ENCODE measurements at regions of chr2 and their contacts with region 1.

Region 1: GRCh38 chr2:201786471-201786870 is 5.7 kb upstream of the ALS2 start:
- DNase-seq: no peak
- ATAC-seq: no peak
- H3K4me3 ChIP-seq: no peak overlapping the region
- H3K4me3 Mint-ChIP-seq: no peak overlapping the region
- H3K27ac ChIP-seq: no peak overlapping the region
- H3K27ac Mint-ChIP-seq: no peak overlapping the region
- H3K4me1 ChIP-seq: peaks cover 4 to 5% of the 10 kb centered on the region in 2 experiments
- H3K4me1 Mint-ChIP-seq: peaks cover 5 to 8% (median 6%) of the 10 kb centered on the region in 3 donors
- H3K27me3 ChIP-seq: no peaks in the 10 kb centered on the region
- H3K27me3 Mint-ChIP-seq: peaks cover 0 to 6% of the 10 kb centered on the region in 2 donors

Region 2: GRCh38 chr2:200929334-200930249 is 856.9 kb before region 1 on chr2:
- CTCF ChIA-PET with region 1: no interaction called
- POLR2A ChIA-PET with region 1: no interaction called
- DNase-seq: no peak
- ATAC-seq: no peak
- H3K4me3 ChIP-seq: no peak overlapping the region
- H3K4me3 Mint-ChIP-seq: no peak overlapping the region
- H3K27ac ChIP-seq: no peak overlapping the region
- H3K27ac Mint-ChIP-seq: peak overlapping the region; percentile 50 to 52
- H3K4me1 ChIP-seq: no peaks in the 10 kb centered on the region
- H3K4me1 Mint-ChIP-seq: no peaks in the 10 kb centered on the region
- H3K27me3 ChIP-seq: no peaks in the 10 kb centered on the region
- H3K27me3 Mint-ChIP-seq: no peaks in the 10 kb centered on the region

Region 3: DNA sequence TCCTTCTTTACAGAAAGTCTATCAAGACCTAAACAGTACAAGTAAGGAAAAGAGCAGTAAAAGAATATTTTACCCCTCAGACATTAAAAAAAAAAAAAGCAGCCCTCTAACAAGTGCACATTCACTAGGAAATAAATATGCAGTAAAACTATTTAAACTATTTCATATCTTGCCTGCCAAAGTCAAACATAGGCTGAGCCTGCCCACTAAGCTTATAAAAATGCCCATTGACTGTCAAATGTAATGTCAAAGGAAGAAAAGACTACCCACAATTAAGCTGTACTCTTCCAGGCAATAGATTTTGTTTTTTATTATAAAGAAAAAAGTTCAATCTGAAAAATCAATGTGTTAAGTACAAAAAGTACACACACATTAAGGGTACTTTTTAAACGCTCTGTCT is 17.6 kb before region 1 on chr2:
- CTCF ChIA-PET with region 1: interaction called in 1 of 2 experiments, 13 read pairs
- POLR2A ChIA-PET with region 1: no interaction called
- DNase-seq: no peak
- ATAC-seq: no peak
- H3K4me3 ChIP-seq: no peak overlapping the region
- H3K4me3 Mint-ChIP-seq: no peak overlapping the region
- H3K27ac ChIP-seq: no peak overlapping the region
- H3K27ac Mint-ChIP-seq: no peak overlapping the region
- H3K4me1 ChIP-seq: no peaks in the 10 kb centered on the region
- H3K4me1 Mint-ChIP-seq: peaks cover 0 to 4% (median 0%) of the 10 kb centered on the region in 3 donors
- H3K27me3 ChIP-seq: no peaks in the 10 kb centered on the region
- H3K27me3 Mint-ChIP-seq: no peaks in the 10 kb centered on the region

Region 4: GRCh38 chr2:201807452-201807999 is 21.1 kb after region 1 on chr2:
- CTCF ChIA-PET with region 1: no interaction called
- POLR2A ChIA-PET with region 1: interaction called in 1 of 2 experiments, 17 read pairs
- DNase-seq: no peak
- ATAC-seq: no peak
- H3K4me3 ChIP-seq: no peak overlapping the region
- H3K4me3 Mint-ChIP-seq: no peak overlapping the region
- H3K27ac ChIP-seq: no peak overlapping the region
- H3K27ac Mint-ChIP-seq: no peak overlapping the region
- H3K4me1 ChIP-seq: no peaks in the 10 kb centered on the region
- H3K4me1 Mint-ChIP-seq: no peaks in the 10 kb centered on the region
- H3K27me3 ChIP-seq: peaks cover 0 to 16% of the 10 kb centered on the region in 2 experiments
- H3K27me3 Mint-ChIP-seq: peaks cover 14 to 21% of the 10 kb centered on the region in 2 donors

Region 5: GRCh38 chr2:201821080-201821479 is 34.6 kb after region 1 on chr2:
- CTCF ChIA-PET with region 1: no interaction called
- POLR2A ChIA-PET with region 1: no interaction called
- DNase-seq: no peak
- ATAC-seq: no peak
- H3K4me3 ChIP-seq: no peak overlapping the region
- H3K4me3 Mint-ChIP-seq: no peak overlapping the region
- H3K27ac ChIP-seq: no peak overlapping the region
- H3K27ac Mint-ChIP-seq: no peak overlapping the region
- H3K4me1 ChIP-seq: no peaks in the 10 kb centered on the region
- H3K4me1 Mint-ChIP-seq: no peaks in the 10 kb centered on the region
- H3K27me3 ChIP-seq: peaks cover 0 to 7% of the 10 kb centered on the region in 2 experiments
- H3K27me3 Mint-ChIP-seq: peaks cover 10 to 17% of the 10 kb centered on the region in 2 donors

Region 6: DNA sequence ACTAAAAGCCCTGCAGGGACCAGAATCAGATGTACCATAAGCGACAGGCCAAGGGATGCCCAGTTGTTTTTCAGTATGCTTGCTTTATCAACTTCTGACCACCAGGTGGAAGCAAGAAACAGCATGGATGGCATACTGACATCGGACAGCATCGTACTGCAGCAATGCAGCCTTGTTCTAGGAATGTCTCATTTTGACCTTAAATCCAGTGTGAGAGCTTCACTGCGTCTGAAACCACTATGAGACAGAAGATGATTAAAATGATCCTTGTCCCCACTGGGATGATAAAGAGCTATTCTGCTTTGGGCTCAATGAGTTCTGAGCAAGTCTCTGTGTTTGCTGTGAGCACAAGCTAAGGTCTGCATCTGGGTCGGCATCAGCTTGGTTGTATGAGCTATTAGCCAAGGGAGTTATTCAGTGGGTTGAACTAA is 74.2 kb after region 1 on chr2:
- CTCF ChIA-PET with region 1: no interaction called
- POLR2A ChIA-PET with region 1: interaction called in 1 of 2 experiments, 12 read pairs
- DNase-seq: peak in 19 of 35 experiments; percentile 1 to 70 (median 21)
- ATAC-seq: peak; percentile 63 to 83 (median 73)
- H3K4me3 ChIP-seq: no peak overlapping the region
- H3K4me3 Mint-ChIP-seq: no peak overlapping the region
- H3K27ac ChIP-seq: no peak overlapping the region
- H3K27ac Mint-ChIP-seq: no peak overlapping the region
- H3K4me1 ChIP-seq: peaks cover 2 to 8% of the 10 kb centered on the region in 2 experiments
- H3K4me1 Mint-ChIP-seq: peaks cover 13 to 18% (median 17%) of the 10 kb centered on the region in 3 donors
- H3K27me3 ChIP-seq: peaks cover 9 to 26% of the 10 kb centered on the region in 2 experiments
- H3K27me3 Mint-ChIP-seq: peaks cover 30 to 32% of the 10 kb centered on the region in 2 donors